Ascending aorta (tissue), 2 donors: ENCODE measurements at regions of chr4 and their contacts with region 1.

Region 1: GRCh38 chr4:72505314-72505744 is 63.7 kb downstream of the ADAMTS3 start:
- DNase-seq: no peak
- H3K4me3 ChIP-seq: no peak overlapping the region
- H3K27ac ChIP-seq: no peak overlapping the region
- H3K4me1 ChIP-seq: no peaks in the 10 kb centered on the region
- H3K27me3 ChIP-seq: no peaks in the 10 kb centered on the region
- CTCF ChIP-seq: peak; percentile 24 to 67 (median 43)

Region 2: DNA sequence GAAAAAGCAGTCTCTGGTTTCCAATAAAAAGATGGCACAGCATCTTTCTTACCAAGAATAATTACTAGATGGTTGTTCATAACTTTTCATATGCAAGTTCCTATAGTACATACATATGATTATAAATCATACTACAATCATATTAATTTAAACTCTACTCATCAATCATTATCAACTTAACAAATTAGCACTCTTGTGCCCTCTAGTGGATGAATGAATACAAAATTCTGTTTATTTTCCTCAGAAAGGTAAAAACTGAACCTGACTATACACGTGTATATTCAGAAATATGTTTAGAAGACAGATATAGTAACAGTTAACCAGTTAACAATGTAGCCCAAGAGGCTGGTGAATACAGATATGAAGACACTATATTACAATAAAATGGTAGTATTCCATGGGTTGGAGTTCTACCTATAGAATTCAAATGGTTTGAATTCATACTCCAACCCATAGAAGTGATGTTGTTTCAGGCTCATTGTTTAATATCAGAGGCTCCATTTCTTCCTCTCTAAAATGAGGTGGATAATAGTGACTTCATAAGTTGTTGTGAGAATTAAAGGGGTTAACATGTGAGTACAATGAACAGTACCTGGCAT is 36.3 kb before region 1 on chr4:
- intact Hi-C with region 1: no loop called
- DNase-seq: no peak
- H3K4me3 ChIP-seq: no peak overlapping the region
- H3K27ac ChIP-seq: no peak overlapping the region
- H3K4me1 ChIP-seq: no peaks in the 10 kb centered on the region
- H3K27me3 ChIP-seq: no peaks in the 10 kb centered on the region
- CTCF ChIP-seq: peak; percentile 16 to 62 (median 32)

Region 3: GRCh38 chr4:72679666-72680065 is 174.3 kb after region 1 on chr4:
- intact Hi-C with region 1: loop called (anchors 10 kb)
- DNase-seq: no peak
- H3K4me3 ChIP-seq: no peak overlapping the region
- H3K27ac ChIP-seq: no peak overlapping the region
- H3K4me1 ChIP-seq: no peaks in the 10 kb centered on the region
- H3K27me3 ChIP-seq: no peaks in the 10 kb centered on the region
- CTCF ChIP-seq: no peak